B cell (primary cell): ENCODE measurements at regions of chr1 and their contacts with region 1.

Region 1: GRCh38 chr1:59076612-59077011 is 220.3 kb upstream of the FGGY start:
- DNase-seq: no peak
- ATAC-seq: peak; percentile 21
- H3K4me3 ChIP-seq: no peak overlapping the region
- H3K4me3 Mint-ChIP-seq: no peak overlapping the region
- H3K27ac ChIP-seq: no peak overlapping the region
- H3K27ac Mint-ChIP-seq: no peak overlapping the region
- H3K4me1 ChIP-seq: peaks cover 12 to 16% of the 10 kb centered on the region in 2 donors
- H3K4me1 Mint-ChIP-seq: peaks cover 23% of the 10 kb centered on the region
- H3K27me3 ChIP-seq: no peaks in the 10 kb centered on the region
- H3K27me3 Mint-ChIP-seq: no peaks in the 10 kb centered on the region
- CTCF ChIP-seq: no peak

Region 2: DNA sequence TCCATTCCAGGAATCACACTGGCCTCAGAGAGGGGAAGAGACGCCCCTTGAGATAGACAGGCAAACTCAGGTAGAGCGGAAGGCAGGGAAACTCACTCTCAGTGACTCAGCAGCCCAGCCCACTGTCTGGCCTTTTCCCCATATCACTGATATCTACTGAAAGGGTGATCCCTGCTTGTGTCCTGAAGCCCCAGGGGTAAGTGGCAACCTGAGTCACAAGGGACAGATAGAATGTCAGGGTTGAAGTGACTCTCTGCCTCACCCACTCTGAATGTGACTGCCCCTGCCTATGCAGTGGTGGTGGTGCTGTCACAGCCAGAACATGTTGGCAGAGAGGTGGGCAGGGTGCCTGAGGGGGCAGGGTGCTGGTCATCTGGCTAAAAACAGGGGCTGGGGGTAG is 62.8 kb after region 1 on chr1:
- CTCF ChIA-PET with region 1: no interaction called
- POLR2A ChIA-PET with region 1: no interaction called
- intact Hi-C with region 1: loop called (anchors 10 kb)
- DNase-seq: no peak
- ATAC-seq: no peak
- H3K4me3 ChIP-seq: no peak overlapping the region
- H3K4me3 Mint-ChIP-seq: no peak overlapping the region
- H3K27ac ChIP-seq: no peak overlapping the region
- H3K27ac Mint-ChIP-seq: no peak overlapping the region
- H3K4me1 ChIP-seq: peaks cover 32 to 38% of the 10 kb centered on the region in 2 donors
- H3K4me1 Mint-ChIP-seq: peaks cover 41% of the 10 kb centered on the region
- H3K27me3 ChIP-seq: no peaks in the 10 kb centered on the region
- H3K27me3 Mint-ChIP-seq: no peaks in the 10 kb centered on the region
- CTCF ChIP-seq: no peak